HepG2 (cell line): ENCODE measurements at regions of chr4 and their contacts with region 1.

Region 1: GRCh38 chr4:59904339-59904738 is 1295.8 kb upstream of the ADGRL3 start:
- DNase-seq: no peak
- ATAC-seq: no peak
- H3K4me3 ChIP-seq: no peak overlapping the region
- H3K27ac ChIP-seq: no peak overlapping the region
- H3K4me1 ChIP-seq: no peaks in the 10 kb centered on the region
- H3K27me3 ChIP-seq: no peaks in the 10 kb centered on the region
- CTCF ChIP-seq: no peak
- EP300 ChIP-seq: no peak
- POLR2A ChIP-seq: no peak
- RAD21 ChIP-seq: no peak

Region 2: GRCh38 chr4:59869559-59869958 is 34.8 kb before region 1 on chr4:
- CTCF ChIA-PET with region 1: no interaction called
- POLR2A ChIA-PET with region 1: no interaction called
- in situ Hi-C with region 1: no loop called
- intact Hi-C with region 1: loop called (anchors 1 kb)
- DNase-seq: no peak
- ATAC-seq: no peak
- H3K4me3 ChIP-seq: no peak overlapping the region
- H3K27ac ChIP-seq: no peak overlapping the region
- H3K4me1 ChIP-seq: no peaks in the 10 kb centered on the region
- H3K27me3 ChIP-seq: no peaks in the 10 kb centered on the region
- CTCF ChIP-seq: no peak
- EP300 ChIP-seq: no peak
- POLR2A ChIP-seq: no peak
- RAD21 ChIP-seq: no peak